ENCODE measurements at regions of chr15 and their contacts with region 1.

Region 1: DNA sequence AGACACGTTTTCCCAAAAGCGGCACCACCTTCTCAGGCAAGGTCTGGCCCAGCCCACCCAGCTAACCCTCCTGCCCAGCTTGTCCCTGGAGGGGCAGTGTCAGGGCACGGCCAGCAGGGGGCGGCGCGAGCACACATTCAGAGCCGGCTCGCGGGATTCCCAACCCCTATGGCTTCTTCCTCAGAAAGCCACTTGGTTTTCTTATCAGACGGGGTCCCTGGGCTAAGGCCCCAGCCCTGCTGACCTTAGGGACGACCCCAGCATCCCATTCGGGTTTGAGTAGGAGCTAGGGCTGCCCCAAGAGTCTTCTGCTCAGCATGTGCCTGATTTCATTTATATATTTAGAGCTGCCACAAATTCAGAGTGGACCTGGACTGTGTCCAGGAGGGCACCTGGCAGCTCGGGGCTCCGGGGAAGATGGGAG is 14.5 kb downstream of the RLBP1 start:
- DNase-seq: peak; percentile 55 to 69 (median 57)
- H3K4me3 ChIP-seq: no peak overlapping the region
- H3K4me3 Mint-ChIP-seq: peak overlapping the region in 2 of 8 donors; percentile 15 to 59
- H3K27ac ChIP-seq: no peak overlapping the region
- H3K27ac Mint-ChIP-seq: peak overlapping the region in 2 of 7 donors; percentile 6 to 77
- H3K4me1 ChIP-seq: peaks cover 25% of the 10 kb centered on the region
- H3K4me1 Mint-ChIP-seq: peaks cover 23 to 39% (median 26%) of the 10 kb centered on the region in 4 donors
- H3K27me3 ChIP-seq: no peaks in the 10 kb centered on the region
- H3K27me3 Mint-ChIP-seq: peaks cover 0 to 2% of the 10 kb centered on the region in 2 donors

Region 2: DNA sequence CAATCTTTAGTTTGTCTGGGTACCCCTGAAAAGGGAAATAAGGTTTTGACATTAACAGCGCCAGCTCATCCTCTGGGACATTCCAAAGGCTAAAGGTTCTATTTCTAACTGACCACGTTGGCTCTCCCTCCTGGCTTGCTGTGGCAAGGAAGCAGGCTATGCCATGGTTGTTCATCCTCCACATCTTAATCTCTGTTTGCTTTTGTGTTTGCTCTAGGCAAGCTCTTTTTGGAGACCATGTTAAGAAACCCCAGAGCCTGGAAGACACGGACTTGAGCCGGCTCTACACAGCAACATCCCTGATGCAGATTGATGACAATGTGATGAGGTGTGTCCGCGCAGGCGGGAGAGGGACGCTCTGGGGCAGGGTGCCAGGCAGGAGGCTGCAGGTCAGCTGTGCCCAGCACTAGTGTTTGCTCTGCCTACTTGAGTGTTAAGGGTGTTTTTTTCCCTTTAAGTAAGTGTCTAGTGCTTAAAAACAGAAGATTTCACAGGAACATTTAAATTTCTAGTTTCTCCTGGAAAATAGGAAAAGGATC is 18.9 kb before region 1 on chr15:
- CTCF ChIA-PET with region 1: interaction called, 25 read pairs
- POLR2A ChIA-PET with region 1: no interaction called
- intact Hi-C with region 1: no loop called
- DNase-seq: no peak
- H3K4me3 ChIP-seq: no peak overlapping the region
- H3K4me3 Mint-ChIP-seq: no peak overlapping the region
- H3K27ac ChIP-seq: no peak overlapping the region
- H3K27ac Mint-ChIP-seq: peak overlapping the region in 3 of 7 donors; percentile 13 to 81 (median 38)
- H3K4me1 ChIP-seq: no peaks in the 10 kb centered on the region
- H3K4me1 Mint-ChIP-seq: no peaks in the 10 kb centered on the region
- H3K27me3 ChIP-seq: no peaks in the 10 kb centered on the region
- H3K27me3 Mint-ChIP-seq: no peaks in the 10 kb centered on the region

Region 3: GRCh38 chr15:89221543-89221942 is 14.6 kb after region 1 on chr15 and contains the start of gene RLBP1:
- CTCF ChIA-PET with region 1: interaction called, 18 read pairs
- POLR2A ChIA-PET with region 1: no interaction called
- intact Hi-C with region 1: no loop called
- DNase-seq: no peak
- H3K4me3 ChIP-seq: no peak within 1 kb of the TSS
- H3K4me3 Mint-ChIP-seq: no peak within 1 kb of the TSS
- H3K27ac ChIP-seq: no peak within 1 kb of the TSS
- H3K27ac Mint-ChIP-seq: no peak within 1 kb of the TSS
- H3K4me1 ChIP-seq: no peaks in the 10 kb centered on the region
- H3K4me1 Mint-ChIP-seq: no peaks in the 10 kb centered on the region
- H3K27me3 ChIP-seq: no peaks in the 10 kb centered on the region
- H3K27me3 Mint-ChIP-seq: peaks cover 0 to 4% of the 10 kb centered on the region in 2 donors
- total RNA-seq, gene RLBP1: not detected

Region 4: DNA sequence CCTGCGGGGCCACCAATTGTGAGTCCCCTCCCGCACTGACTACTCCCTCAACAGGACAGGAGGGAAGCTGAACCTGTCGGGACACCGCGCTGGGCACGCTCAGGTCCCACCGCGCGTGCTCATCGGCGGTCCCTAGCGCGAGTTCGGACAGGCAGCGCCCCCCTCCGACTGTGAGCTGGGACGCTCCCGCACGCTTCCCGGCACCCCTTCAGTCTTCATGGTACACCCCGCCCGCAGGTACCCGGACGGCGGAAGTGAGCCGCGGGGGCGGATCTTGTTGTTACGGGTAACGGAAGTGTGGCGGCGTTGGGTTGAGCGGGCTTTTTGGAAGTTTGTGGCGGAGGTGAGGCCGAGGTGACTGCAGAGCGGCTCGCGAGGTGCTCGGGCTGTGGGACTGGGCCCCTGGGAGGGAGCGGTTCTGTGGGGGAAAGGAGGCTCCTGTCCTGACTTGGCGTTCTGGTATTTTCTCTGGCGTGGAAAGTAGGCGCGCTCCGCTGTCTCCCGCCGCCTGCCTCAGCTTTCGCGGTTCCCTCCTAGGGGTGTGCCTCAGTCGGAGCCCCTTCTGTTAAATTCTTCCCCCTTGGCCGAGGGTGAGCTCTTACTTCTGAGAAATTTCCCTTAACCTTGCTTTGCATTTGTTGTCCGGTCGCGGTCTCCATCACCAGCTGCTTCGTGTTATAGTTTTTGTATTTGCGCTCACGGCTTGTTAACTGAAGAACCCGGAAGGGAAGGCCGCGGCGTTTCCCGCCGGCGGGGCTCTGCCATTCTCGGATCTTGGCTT is 37.0 kb after region 1 on chr15 and contains the start of gene FANCI:
- CTCF ChIA-PET with region 1: interaction called, 28 read pairs
- POLR2A ChIA-PET with region 1: no interaction called
- intact Hi-C with region 1: loop called (anchors 1 kb)
- DNase-seq: peak; percentile 93 to 96 (median 94)
- H3K4me3 ChIP-seq: peak within 1 kb of the TSS; percentile 95
- H3K4me3 Mint-ChIP-seq: peak within 1 kb of the TSS; percentile 91 to 98 (median 94)
- H3K27ac ChIP-seq: peak within 1 kb of the TSS; percentile 43
- H3K27ac Mint-ChIP-seq: peak within 1 kb of the TSS; percentile 80 to 92 (median 89)
- H3K4me1 ChIP-seq: peaks cover 14% of the 10 kb centered on the region
- H3K4me1 Mint-ChIP-seq: peaks cover 20 to 40% (median 30%) of the 10 kb centered on the region in 4 donors
- H3K27me3 ChIP-seq: no peaks in the 10 kb centered on the region
- H3K27me3 Mint-ChIP-seq: no peaks in the 10 kb centered on the region
- total RNA-seq, gene FANCI: 10.9 to 19.0 TPM

Region 5: DNA sequence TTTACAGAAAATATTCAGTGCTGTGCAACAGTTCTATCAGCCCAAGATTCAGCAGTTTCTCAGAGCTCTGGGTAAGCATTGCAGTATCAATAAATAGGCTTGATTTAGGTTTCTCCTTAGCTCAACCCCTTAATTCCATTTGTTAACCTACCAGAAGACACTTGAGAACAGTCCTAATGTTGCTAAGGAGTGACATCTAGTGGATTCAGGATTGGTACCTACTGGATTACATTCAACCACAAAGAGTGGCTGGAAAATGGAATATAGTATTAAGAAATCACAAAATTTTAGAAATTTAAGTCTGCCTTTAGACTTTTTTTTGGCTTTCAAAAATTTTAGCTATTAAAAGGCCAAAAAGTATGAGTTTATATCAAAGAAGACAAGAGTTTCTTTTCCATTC is 93.0 kb after region 1 on chr15:
- CTCF ChIA-PET with region 1: interaction called, 13 read pairs
- POLR2A ChIA-PET with region 1: no interaction called
- intact Hi-C with region 1: no loop called
- DNase-seq: no peak
- H3K4me3 ChIP-seq: no peak overlapping the region
- H3K4me3 Mint-ChIP-seq: no peak overlapping the region
- H3K27ac ChIP-seq: no peak overlapping the region
- H3K27ac Mint-ChIP-seq: no peak overlapping the region
- H3K4me1 ChIP-seq: no peaks in the 10 kb centered on the region
- H3K4me1 Mint-ChIP-seq: no peaks in the 10 kb centered on the region
- H3K27me3 ChIP-seq: no peaks in the 10 kb centered on the region
- H3K27me3 Mint-ChIP-seq: no peaks in the 10 kb centered on the region

Region 6: GRCh38 chr15:89334510-89335288 is 127.8 kb after region 1 on chr15 and contains the start of gene POLG:
- CTCF ChIA-PET with region 1: interaction called, 4 read pairs
- POLR2A ChIA-PET with region 1: no interaction called
- intact Hi-C with region 1: loop called (anchors 10 kb)
- DNase-seq: peak; percentile 99 to 100 (median 99)
- H3K4me3 ChIP-seq: peak within 1 kb of the TSS; percentile 81 to 92
- H3K4me3 Mint-ChIP-seq: peak within 1 kb of the TSS; percentile 90 to 100 (median 94)
- H3K27ac ChIP-seq: peak within 1 kb of the TSS; percentile 69
- H3K27ac Mint-ChIP-seq: peak within 1 kb of the TSS; percentile 88 to 100 (median 98)
- H3K4me1 ChIP-seq: peaks cover 54% of the 10 kb centered on the region
- H3K4me1 Mint-ChIP-seq: peaks cover 37 to 59% (median 47%) of the 10 kb centered on the region in 4 donors
- H3K27me3 ChIP-seq: no peaks in the 10 kb centered on the region
- H3K27me3 Mint-ChIP-seq: peaks cover 2 to 7% of the 10 kb centered on the region in 2 donors
- total RNA-seq, gene POLG: 148 to 151 TPM

Region 7: DNA sequence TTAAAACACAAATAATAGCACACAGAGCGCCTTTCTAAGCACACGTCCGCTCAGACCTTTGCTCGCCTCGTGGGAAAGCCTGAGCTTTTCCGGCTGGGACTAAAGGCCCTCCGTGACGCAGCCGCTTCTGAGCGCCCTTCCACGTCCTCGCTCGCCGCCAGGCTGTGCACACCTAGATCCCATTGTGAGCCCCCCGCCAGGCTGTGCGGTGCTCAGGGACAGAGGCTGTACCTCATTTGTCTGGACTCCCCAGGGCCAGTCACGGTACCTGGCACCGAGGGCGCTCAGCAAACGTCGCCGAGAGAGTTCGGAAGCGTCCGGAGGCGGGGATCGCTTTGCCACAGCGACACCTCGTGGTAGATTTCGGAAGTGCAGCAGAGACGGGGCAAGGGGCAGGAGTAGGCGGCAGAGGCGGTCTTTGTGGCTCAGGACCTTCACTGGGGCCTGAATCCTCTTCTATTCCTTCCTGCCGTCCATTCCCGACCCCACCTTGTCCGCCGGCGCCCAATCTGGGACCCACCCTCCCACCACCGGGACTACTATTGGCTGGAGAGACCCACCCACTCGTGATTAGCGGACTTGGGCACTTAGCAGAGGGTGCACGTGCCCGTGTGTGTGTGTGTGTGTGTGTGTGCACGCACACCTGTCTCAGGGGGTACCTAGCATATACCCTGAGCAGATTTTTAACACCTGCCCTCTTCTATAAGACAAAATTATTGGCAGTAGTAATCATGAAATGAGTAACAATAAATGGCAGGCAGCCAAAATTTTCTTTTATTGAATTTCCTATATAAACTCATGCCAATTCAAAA is 223.8 kb after region 1 on chr15:
- CTCF ChIA-PET with region 1: interaction called, 23 read pairs
- POLR2A ChIA-PET with region 1: no interaction called
- intact Hi-C with region 1: loop called (anchors 1 kb)
- DNase-seq: peak; percentile 73 to 84 (median 77)
- H3K4me3 ChIP-seq: peak overlapping the region; percentile 31 to 51
- H3K4me3 Mint-ChIP-seq: peak overlapping the region; percentile 74 to 89 (median 82)
- H3K27ac ChIP-seq: no peak overlapping the region
- H3K27ac Mint-ChIP-seq: peak overlapping the region in 1 of 7 donors; percentile 53
- H3K4me1 ChIP-seq: peaks cover 5% of the 10 kb centered on the region
- H3K4me1 Mint-ChIP-seq: peaks cover 4 to 7% (median 6%) of the 10 kb centered on the region in 4 donors
- H3K27me3 ChIP-seq: no peaks in the 10 kb centered on the region
- H3K27me3 Mint-ChIP-seq: peaks cover 6 to 23% of the 10 kb centered on the region in 2 donors